ENCODE measurements at regions of chr18 and their contacts with region 1.

Region 1: DNA sequence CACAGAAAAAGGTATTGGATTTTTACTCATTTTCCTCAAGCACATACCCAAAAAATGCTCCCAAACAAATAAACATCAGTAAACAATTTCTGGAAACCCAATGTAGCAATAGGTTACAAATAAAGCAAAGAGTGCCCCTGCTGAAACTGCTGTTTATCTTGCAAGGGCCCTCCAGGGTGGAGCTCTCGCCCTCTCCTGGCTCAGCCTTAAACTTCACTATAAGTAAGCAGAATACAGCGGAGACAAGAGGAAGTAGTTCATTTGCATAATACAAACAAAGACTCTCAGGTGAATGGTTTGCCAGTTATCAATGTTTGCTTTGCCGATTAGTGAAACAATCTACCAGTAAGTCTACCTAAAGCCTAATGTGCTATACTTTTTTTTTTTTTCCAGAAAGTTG is 437.6 kb downstream of the DLGAP1 start:
- DNase-seq: no peak
- H3K4me3 ChIP-seq: no peak overlapping the region
- H3K27ac ChIP-seq: no peak overlapping the region
- H3K27me3 ChIP-seq: no peaks in the 10 kb centered on the region
- CTCF ChIP-seq: no peak

Region 2: GRCh38 chr18:3952031-3952430 is 65.4 kb before region 1 on chr18:
- intact Hi-C with region 1: loop called in 1 of 2 experiments (anchors 10 kb)
- DNase-seq: no peak
- H3K4me3 ChIP-seq: no peak overlapping the region
- H3K27ac ChIP-seq: no peak overlapping the region
- H3K27me3 ChIP-seq: no peaks in the 10 kb centered on the region
- CTCF ChIP-seq: no peak